Thyroid gland (tissue), 4 donors: ENCODE measurements at regions of chr16 and their contacts with region 1.

Region 1: GRCh38 chr16:30921748-30922419 is 1.5 kb upstream of the FBXL19 start:
- DNase-seq: peak; percentile 93
- H3K4me3 ChIP-seq: peak overlapping the region; percentile 13 to 84 (median 35)
- H3K27ac ChIP-seq: peak overlapping the region; percentile 28 to 92 (median 76)
- H3K4me1 ChIP-seq: peaks cover 9 to 10% of the 10 kb centered on the region in 2 donors
- H3K27me3 ChIP-seq: no peaks in the 10 kb centered on the region
- CTCF ChIP-seq: peak; percentile 58 to 96 (median 86)
- POLR2A ChIP-seq: peak in 1 of 2 donors; percentile 46

Region 2: GRCh38 chr16:30844671-30845449 is 77.0 kb before region 1 on chr16:
- intact Hi-C with region 1: loop called (anchors 2 kb)
- DNase-seq: peak; percentile 56 to 75
- H3K4me3 ChIP-seq: no peak overlapping the region
- H3K27ac ChIP-seq: peak overlapping the region in 1 of 3 donors; percentile 41
- H3K4me1 ChIP-seq: peaks cover 5 to 10% of the 10 kb centered on the region in 2 donors
- H3K27me3 ChIP-seq: no peaks in the 10 kb centered on the region
- CTCF ChIP-seq: peak; percentile 63 to 94 (median 88)
- POLR2A ChIP-seq: no peak

Region 3: DNA sequence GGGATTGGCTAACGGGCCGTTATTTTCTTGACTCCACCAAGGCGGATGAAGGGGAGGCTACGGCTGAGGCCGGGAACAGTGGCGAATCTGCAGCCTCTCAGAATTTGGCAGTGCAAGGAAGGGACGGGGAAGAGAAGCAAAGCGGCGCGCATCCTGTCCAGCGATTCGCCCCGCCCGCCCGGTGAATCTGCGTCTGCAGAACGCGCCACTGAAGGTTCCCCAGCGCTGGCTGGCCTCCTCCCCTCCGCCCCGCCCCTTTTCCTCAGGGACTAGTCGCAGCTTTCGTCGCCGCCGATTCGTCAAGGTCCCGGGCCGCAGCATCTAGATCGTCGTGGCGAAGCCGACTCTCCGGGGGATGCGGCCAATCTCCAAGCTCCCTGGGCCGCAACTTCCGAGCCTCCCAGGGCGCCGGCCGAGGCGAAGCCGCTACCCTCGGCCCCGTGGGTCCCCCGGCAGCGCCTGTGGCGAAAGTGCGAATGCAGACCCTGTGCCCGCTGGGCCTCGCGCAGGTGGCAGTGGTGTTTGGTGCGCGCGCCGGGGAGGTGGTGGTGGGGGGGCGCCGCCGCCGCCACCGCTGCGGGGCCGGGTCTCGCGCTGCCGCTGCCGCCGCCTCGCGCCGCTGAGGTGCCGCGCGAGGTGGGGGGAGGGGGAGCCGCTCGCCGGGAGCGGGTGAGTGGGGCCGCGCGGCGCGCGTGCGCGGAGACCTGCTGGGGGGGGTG is 35.7 kb after region 1 on chr16 and contains the start of gene SETD1A:
- intact Hi-C with region 1: no loop called
- DNase-seq: peak; percentile 98 to 99
- H3K4me3 ChIP-seq: peak within 1 kb of the TSS; percentile 67 to 90 (median 70)
- H3K27ac ChIP-seq: peak within 1 kb of the TSS; percentile 93 to 99 (median 95)
- H3K4me1 ChIP-seq: peaks cover 8 to 14% of the 10 kb centered on the region in 2 donors
- H3K27me3 ChIP-seq: no peaks in the 10 kb centered on the region
- CTCF ChIP-seq: peak in 2 of 6 experiments; percentile 1 to 3
- POLR2A ChIP-seq: peak in 1 of 2 donors; percentile 58
- total RNA-seq, gene SETD1A: 7.7 to 11.4 (median 9.2) TPM

Region 4: GRCh38 chr16:30984669-30985400 is 63.0 kb after region 1 on chr16 and contains the start of gene HSD3B7:
- intact Hi-C with region 1: no loop called
- DNase-seq: peak; percentile 83 to 89
- H3K4me3 ChIP-seq: peak within 1 kb of the TSS in 2 of 3 donors; percentile 6 to 27
- H3K27ac ChIP-seq: peak within 1 kb of the TSS in 1 of 3 donors; percentile 31
- H3K4me1 ChIP-seq: peaks cover 8 to 12% of the 10 kb centered on the region in 2 donors
- H3K27me3 ChIP-seq: no peaks in the 10 kb centered on the region
- CTCF ChIP-seq: peak; percentile 86 to 95 (median 92)
- POLR2A ChIP-seq: no peak
- total RNA-seq, gene HSD3B7: 4.0 to 13.8 (median 10.9) TPM